ENCODE measurements at regions of chr1 and their contacts with region 1.

Region 1: DNA sequence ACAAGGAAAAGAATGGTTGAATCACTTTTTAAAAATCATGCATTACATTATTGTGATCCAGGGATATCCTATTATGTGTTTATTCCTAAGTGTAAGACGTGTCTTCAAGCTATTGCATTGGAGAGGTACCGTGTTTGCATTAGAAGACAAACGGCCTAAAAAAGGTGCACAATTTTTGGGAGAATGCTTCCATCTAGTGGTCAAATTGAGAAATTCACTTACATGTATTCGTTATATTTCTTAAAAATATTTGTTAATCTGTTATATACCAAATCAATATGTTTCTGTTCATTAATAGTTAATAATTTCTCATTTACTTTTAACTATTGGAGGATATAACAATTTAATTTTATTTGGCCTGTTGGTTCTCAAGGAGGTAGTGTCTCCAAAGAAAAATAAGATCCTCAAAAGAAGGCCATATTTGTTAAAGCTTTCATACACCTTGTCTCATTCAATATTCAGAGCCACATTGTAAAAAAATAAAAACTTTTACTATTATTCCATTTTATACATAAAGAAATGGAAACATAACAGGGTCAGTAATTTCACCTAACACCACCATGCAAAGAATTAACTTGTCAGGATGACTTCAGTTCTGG is 40.5 kb upstream of the KCTD3 start:
- DNase-seq: no peak
- H3K4me3 ChIP-seq: no peak overlapping the region
- H3K27ac ChIP-seq: no peak overlapping the region
- H3K27me3 ChIP-seq: no peaks in the 10 kb centered on the region
- CTCF ChIP-seq: peak; percentile 30

Region 2: GRCh38 chr1:214660862-214661261 is 865.8 kb before region 1 on chr1:
- in situ Hi-C with region 1: loop called (anchors 25 kb)
- DNase-seq: peak; percentile 81
- H3K4me3 ChIP-seq: no peak overlapping the region
- H3K27ac ChIP-seq: no peak overlapping the region
- H3K27me3 ChIP-seq: no peaks in the 10 kb centered on the region
- CTCF ChIP-seq: peak; percentile 87

Region 3: DNA sequence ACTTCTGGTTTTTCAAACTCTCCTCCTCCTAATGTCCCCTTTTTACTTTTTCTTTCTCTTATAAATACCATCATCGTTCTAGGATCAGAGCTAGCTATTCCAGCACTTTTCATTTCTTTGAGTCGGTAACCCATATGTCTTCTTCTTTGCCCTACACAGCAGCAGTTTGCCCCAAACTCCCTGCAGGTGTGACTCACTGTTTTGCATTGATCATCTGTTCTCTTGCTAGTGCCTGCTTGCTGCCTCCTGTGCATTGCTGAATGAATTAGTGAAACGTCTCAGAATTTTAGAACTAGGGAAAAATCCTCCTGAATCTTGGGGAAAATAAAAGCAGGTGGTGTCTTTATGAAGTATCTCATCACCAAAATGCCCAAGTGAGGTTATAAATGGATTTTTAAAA is 422.4 kb before region 1 on chr1:
- in situ Hi-C with region 1: no loop called
- DNase-seq: no peak
- H3K4me3 ChIP-seq: no peak overlapping the region
- H3K27ac ChIP-seq: no peak overlapping the region
- H3K27me3 ChIP-seq: no peaks in the 10 kb centered on the region
- CTCF ChIP-seq: no peak

Region 4: GRCh38 chr1:215273838-215274516 is 252.7 kb before region 1 on chr1:
- in situ Hi-C with region 1: no loop called
- DNase-seq: peak; percentile 11
- H3K4me3 ChIP-seq: no peak overlapping the region
- H3K27ac ChIP-seq: no peak overlapping the region
- H3K27me3 ChIP-seq: no peaks in the 10 kb centered on the region
- CTCF ChIP-seq: no peak

Region 5: DNA sequence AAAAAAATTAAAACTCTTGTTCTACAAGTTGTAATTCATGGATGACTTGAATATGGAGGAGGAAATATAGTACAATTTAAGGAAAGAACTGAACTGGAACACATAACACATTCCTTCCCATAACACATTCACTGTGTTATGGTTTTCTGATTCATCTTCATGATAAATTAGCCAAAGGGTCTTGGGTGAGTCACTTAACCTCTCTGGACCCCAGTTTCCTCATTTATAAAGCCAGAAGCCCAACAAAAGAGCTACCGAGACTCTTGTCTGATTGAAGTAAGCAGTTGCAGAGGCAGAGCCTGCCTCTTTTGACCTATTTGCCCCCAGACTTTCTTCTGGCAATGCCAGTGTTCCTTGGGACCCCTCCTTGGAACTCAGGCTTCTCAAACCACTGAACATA is 121.4 kb before region 1 on chr1:
- in situ Hi-C with region 1: no loop called
- DNase-seq: no peak
- H3K4me3 ChIP-seq: no peak overlapping the region
- H3K27ac ChIP-seq: no peak overlapping the region
- H3K27me3 ChIP-seq: no peaks in the 10 kb centered on the region
- CTCF ChIP-seq: no peak